ENCODE measurements at regions of chr16 and their contacts with region 1.

Region 1: DNA sequence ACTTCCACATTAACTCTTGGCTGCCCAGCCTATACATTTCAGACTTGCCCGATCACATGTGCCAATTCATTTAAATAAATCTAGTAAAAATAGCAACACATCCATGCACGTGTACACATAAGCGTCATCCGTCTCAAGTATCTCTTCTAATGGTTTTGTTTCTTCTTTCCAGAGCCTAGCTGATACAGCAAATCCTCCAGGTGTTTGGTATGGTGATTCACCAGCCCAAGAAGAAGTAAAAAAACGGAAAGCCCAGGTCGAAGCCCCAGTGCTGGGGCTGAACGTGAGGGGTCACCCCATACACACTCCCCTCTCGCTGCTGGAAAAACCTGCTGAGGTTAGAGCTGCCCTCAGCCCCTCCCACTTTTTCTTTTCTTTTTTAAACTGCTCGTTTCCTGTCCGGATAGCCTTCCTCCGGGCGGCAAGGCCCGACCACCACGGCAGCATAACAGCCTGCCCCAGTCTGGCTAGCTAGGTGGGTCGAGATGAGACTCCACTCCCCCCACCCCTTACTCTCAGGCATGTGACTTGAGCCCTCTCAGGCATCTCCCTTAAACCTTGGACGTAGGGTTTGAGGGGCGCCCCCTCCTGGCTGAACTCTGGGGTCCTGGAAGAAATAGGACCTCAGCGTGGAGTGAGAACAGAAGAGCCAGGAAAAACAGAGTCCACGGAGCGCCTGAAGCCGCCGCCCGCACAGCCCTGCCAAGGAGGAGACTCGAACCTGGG is 13.9 kb upstream of the OR1F1 start:
- DNase-seq: no peak
- H3K4me3 Mint-ChIP-seq: peak overlapping the region; percentile 67
- H3K27ac Mint-ChIP-seq: no peak overlapping the region
- H3K4me1 Mint-ChIP-seq: peaks cover 27% of the 10 kb centered on the region
- H3K27me3 Mint-ChIP-seq: peaks cover 76% of the 10 kb centered on the region

Region 2: DNA sequence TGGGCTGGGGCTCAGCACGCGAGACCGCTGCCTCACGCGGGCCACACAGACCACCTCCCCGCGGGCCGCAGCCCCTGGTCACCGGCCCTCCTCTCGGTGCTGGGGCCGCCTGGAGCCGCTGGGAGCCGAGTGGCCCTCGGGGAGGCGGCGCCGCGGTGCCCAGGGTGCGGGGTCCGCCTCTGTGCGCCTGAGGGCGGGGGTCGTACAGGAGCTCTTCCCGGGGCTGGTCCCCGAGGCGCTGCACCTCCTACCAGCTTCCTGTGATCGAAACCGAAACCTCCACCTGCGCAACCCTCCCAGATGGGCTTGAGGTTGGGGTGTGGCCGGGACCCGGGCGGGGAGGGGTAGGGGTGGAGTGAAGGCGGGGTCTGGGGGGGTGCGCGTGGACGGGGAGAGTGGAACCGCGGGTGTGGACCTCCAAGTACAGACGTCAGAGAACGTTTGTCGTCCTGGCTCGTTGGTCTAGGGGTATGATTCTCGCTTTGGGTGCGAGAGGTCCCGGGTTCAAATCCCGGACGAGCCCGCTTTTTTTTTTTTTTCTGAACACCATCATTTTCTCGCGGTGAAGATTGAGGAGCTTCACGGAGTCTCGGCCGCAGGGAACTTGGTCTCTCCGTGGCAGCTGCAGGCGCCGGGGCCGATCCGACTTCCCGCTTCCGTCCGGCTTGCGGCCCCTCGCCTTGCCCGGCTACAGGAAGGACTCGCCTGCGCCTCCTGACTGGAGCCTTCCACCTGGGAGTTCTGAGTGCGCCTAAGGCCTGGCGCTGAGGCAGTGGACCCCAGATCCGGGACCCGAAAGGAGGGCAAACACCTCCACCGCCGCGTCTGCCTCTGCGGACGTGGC is 15.4 kb before region 1 on chr16:
- intact Hi-C with region 1: loop called (anchors 1 kb)
- DNase-seq: peak; percentile 85
- H3K4me3 Mint-ChIP-seq: peak overlapping the region; percentile 88
- H3K27ac Mint-ChIP-seq: peak overlapping the region; percentile 56
- H3K4me1 Mint-ChIP-seq: peaks cover 21% of the 10 kb centered on the region
- H3K27me3 Mint-ChIP-seq: peaks cover 21% of the 10 kb centered on the region

Region 3: GRCh38 chr16:3188925-3189825 is 15.1 kb after region 1 on chr16:
- intact Hi-C with region 1: loop called (anchors 2 kb)
- DNase-seq: no peak
- H3K4me3 Mint-ChIP-seq: peak overlapping the region; percentile 72
- H3K27ac Mint-ChIP-seq: no peak overlapping the region
- H3K4me1 Mint-ChIP-seq: peaks cover 28% of the 10 kb centered on the region
- H3K27me3 Mint-ChIP-seq: peaks cover 66% of the 10 kb centered on the region

Region 4: DNA sequence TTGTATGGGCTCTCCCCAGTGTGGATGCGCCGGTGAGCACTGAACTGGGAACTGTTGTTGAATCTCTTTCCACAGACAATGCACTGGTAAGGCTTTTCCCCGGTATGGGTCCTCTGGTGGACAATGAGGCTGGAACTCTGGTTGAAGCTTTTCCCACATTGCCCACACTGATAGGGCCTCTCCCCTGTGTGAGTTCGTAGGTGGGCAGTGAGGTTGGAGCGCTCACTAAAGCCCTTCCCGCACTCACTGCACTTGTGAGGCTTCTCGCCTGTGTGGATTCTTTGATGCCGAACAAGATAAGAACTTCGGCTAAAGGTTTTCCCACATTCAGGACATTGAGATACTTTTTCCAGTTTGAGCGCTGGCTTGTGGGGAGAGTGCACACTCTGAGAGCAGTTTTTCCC is 209.0 kb after region 1 on chr16:
- intact Hi-C with region 1: no loop called
- DNase-seq: no peak
- H3K4me3 Mint-ChIP-seq: no peak overlapping the region
- H3K27ac Mint-ChIP-seq: no peak overlapping the region
- H3K4me1 Mint-ChIP-seq: no peaks in the 10 kb centered on the region
- H3K27me3 Mint-ChIP-seq: no peaks in the 10 kb centered on the region